ENCODE measurements at regions of chr18 and their contacts with region 1.

Region 1: DNA sequence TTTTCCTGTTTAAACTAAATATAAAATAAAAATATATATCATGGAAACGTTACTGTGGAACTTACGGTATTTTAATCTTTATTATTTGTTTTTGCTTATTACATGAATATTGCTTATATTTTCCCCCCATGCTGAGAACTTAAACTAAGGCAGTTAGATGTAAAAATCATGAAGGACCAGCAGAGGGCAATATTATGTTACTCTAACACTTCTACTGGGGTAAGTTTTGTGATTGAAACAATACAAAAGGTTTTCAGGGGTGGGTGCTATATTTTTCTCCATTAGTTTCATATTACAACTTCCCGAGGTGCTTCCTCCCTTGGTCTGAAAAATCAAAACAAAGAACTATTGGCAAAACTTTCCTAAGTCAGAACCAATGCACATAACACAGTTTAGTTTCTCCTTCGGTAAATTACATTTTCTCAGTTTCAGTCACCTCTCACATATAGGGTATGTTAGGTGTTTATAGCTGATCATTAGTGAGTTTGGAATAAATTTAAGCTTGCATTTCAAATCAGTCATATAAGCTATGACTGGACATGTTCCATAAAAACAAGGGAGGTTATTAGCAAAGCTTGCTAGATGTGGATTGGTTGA is 54.8 kb downstream of the ZNF407 start:
- DNase-seq: peak; percentile 11 to 32 (median 21)
- ATAC-seq: peak; percentile 67; the same call in 2 of the 3 replicates
- H3K4me3 ChIP-seq: no peak overlapping the region
- H3K27ac ChIP-seq: no peak overlapping the region
- H3K4me1 ChIP-seq: no peaks in the 10 kb centered on the region
- H3K27me3 ChIP-seq: no peaks in the 10 kb centered on the region
- CTCF ChIP-seq: peak in 2 of 3 experiments; percentile 19 to 58; a peak in 3 of 6 replicates
- EP300 ChIP-seq: no peak
- POLR2A ChIP-seq: no peak
- RAD21 ChIP-seq: peak; percentile 38 to 65

Region 2: DNA sequence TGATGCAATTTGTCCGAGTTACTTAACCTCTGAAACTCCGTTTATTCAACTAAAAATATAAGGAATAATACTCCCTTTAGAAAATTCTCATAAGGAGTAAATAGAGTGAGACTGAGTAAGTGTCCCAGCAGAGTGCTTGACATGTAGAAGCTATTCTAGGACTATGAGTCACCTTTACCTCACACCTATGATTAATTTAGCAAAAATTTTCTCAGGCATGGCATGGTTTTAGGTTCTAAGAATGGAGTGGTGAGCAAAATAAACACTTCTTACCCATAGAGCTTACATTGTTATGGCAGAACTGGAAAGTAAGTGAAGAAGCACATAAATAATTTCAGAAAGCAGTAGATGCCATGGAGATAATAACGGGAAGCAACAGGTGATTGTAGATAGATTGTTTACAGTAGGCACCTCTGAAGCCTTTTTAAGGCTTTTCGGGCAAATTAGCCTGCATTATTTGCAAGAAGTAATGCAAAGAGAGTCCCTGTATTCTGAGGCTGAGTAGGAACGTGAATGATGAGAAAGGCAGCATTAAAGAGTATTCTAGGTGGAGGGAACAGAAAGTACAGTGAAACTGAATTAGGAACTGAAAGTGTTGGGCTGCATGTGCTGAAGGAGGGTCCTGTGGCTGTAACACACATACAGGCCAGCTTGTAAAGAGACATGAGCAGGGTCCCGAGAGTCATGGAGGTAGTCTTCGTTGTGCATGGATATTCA is 154.4 kb after region 1 on chr18:
- CTCF ChIA-PET with region 1: no interaction called
- POLR2A ChIA-PET with region 1: no interaction called
- in situ Hi-C with region 1: no loop called
- intact Hi-C with region 1: loop called (anchors 10 kb)
- DNase-seq: no peak
- ATAC-seq: no peak
- H3K4me3 ChIP-seq: no peak overlapping the region
- H3K27ac ChIP-seq: no peak overlapping the region
- H3K4me1 ChIP-seq: peaks cover 0 to 13% of the 10 kb centered on the region in 2 experiments; a peak in 2 of 5 replicates
- H3K27me3 ChIP-seq: no peaks in the 10 kb centered on the region
- CTCF ChIP-seq: no peak
- EP300 ChIP-seq: no peak
- POLR2A ChIP-seq: no peak
- RAD21 ChIP-seq: no peak

Region 3: DNA sequence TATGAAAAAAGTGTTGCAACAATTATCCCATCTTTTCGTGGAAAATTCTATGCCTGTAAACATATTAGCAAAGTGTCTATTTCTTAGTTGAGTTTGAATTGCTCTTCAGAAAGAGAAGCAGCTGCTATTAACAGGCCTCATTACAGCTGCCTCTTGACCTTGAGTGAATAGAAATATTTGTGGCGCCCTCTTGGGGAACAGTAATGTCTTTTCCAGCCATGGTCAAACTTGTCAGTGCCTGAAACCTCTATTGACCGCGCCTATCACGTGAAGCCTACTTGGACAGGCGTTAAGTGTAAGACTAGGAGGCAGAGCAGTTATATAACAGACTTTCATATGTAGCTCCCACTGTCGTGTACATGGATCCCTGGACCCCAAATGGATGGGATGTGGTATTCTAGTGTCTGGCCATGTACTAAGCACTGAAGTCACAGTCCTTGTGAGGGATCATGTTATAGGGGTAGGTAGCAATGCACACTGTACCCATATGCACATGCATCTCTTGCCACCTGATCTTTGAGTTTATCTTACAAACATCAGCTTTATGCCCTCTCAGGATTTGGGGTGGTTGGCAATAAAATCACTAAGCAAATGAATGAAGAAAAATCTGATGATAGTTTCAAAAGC is 311.4 kb after region 1 on chr18:
- CTCF ChIA-PET with region 1: interaction called, 3 read pairs
- POLR2A ChIA-PET with region 1: no interaction called
- in situ Hi-C with region 1: no loop called
- intact Hi-C with region 1: loop called (anchors 5 kb)
- DNase-seq: peak; percentile 6 to 54 (median 11)
- ATAC-seq: peak; percentile 90
- H3K4me3 ChIP-seq: no peak overlapping the region
- H3K27ac ChIP-seq: no peak overlapping the region
- H3K4me1 ChIP-seq: no peaks in the 10 kb centered on the region
- H3K27me3 ChIP-seq: no peaks in the 10 kb centered on the region
- CTCF ChIP-seq: peak; percentile 40 to 54 (median 42); a peak in 3 of 6 replicates
- EP300 ChIP-seq: no peak
- POLR2A ChIP-seq: no peak
- RAD21 ChIP-seq: peak; percentile 22 to 59; a peak in 2 of 4 replicates

Region 4: GRCh38 chr18:75478996-75479880 is 826.7 kb after region 1 on chr18:
- CTCF ChIA-PET with region 1: interaction called, 5 read pairs
- POLR2A ChIA-PET with region 1: no interaction called
- in situ Hi-C with region 1: loop called (anchors 25 kb)
- intact Hi-C with region 1: loop called (anchors 5 kb)
- DNase-seq: peak; percentile 11 to 28 (median 20)
- ATAC-seq: peak; percentile 72; the same call in 2 of the 3 replicates
- H3K4me3 ChIP-seq: no peak overlapping the region
- H3K27ac ChIP-seq: no peak overlapping the region
- H3K4me1 ChIP-seq: no peaks in the 10 kb centered on the region
- H3K27me3 ChIP-seq: no peaks in the 10 kb centered on the region
- CTCF ChIP-seq: peak; percentile 14 to 60 (median 37); a peak in 4 of 6 replicates
- EP300 ChIP-seq: no peak
- POLR2A ChIP-seq: no peak
- RAD21 ChIP-seq: peak; percentile 48 to 57

Region 5: GRCh38 chr18:75727456-75727855 is 1075.0 kb after region 1 on chr18:
- CTCF ChIA-PET with region 1: interaction called, 4 read pairs
- POLR2A ChIA-PET with region 1: no interaction called
- in situ Hi-C with region 1: no loop called
- intact Hi-C with region 1: loop called (anchors 5 kb)
- DNase-seq: peak; percentile 21 to 38 (median 24)
- ATAC-seq: peak; percentile 66; the same call in 2 of the 3 replicates
- H3K4me3 ChIP-seq: no peak overlapping the region
- H3K27ac ChIP-seq: no peak overlapping the region
- H3K4me1 ChIP-seq: no peaks in the 10 kb centered on the region
- H3K27me3 ChIP-seq: no peaks in the 10 kb centered on the region
- CTCF ChIP-seq: peak; percentile 45 to 56 (median 54); a peak in 5 of 6 replicates
- EP300 ChIP-seq: no peak
- POLR2A ChIP-seq: no peak
- RAD21 ChIP-seq: peak; percentile 19 to 44; a peak in 2 of 4 replicates

Region 6: DNA sequence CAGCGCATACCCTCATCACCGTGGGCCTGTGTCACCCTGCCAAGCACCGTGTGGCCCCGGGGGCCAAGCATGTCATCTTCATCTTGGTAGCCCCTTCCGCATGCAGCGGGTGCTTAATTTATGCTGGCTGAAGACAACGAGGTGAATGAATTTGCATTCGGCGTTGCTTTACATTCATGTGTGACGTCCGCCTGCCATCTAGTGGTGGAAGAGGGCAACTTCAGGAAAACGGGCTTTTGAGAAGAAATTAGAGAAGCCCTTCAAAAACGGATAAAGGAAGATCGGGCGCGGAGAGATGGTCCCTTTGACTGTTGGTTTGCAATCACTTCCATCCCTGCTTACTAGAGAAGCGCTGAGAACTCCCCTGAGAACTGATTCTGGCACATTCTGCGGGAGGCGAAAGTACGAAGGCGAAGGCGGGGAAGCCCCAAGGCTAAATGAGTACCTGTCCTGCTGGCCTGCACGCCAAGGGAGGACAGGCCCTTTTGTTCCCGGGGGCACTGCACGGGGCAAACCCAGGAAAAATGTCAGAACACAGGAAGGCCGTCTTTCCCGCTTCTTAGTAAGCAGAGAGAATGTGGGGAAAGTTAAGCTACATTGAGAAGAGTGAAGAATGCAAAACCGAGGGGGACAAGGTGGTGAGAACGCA is 1696.7 kb after region 1 on chr18:
- CTCF ChIA-PET with region 1: no interaction called
- POLR2A ChIA-PET with region 1: no interaction called
- in situ Hi-C with region 1: loop called (anchors 25 kb)
- intact Hi-C with region 1: no loop called
- DNase-seq: peak; percentile 38 to 68 (median 48)
- ATAC-seq: peak; percentile 75
- H3K4me3 ChIP-seq: no peak overlapping the region
- H3K27ac ChIP-seq: no peak overlapping the region
- H3K4me1 ChIP-seq: no peaks in the 10 kb centered on the region
- H3K27me3 ChIP-seq: peaks cover 4 to 36% of the 10 kb centered on the region in 2 experiments; a peak in 3 of 5 replicates
- CTCF ChIP-seq: peak; percentile 61 to 79 (median 72)
- EP300 ChIP-seq: no peak
- POLR2A ChIP-seq: no peak
- RAD21 ChIP-seq: peak; percentile 39 to 66; a peak in 3 of 4 replicates